ENCODE measurements at regions of chr6 and their contacts with region 1.

Region 1: GRCh38 chr6:138115877-138116660 is 8.8 kb upstream of the PERP start:
- DNase-seq: peak; percentile 26 to 66
- ATAC-seq: peak; percentile 76 to 96 (median 89)
- H3K4me3 ChIP-seq: no peak overlapping the region
- H3K27ac ChIP-seq: no peak overlapping the region
- H3K4me1 ChIP-seq: peaks cover 2% of the 10 kb centered on the region
- H3K27me3 ChIP-seq: peaks cover 0 to 9% (median 7%) of the 10 kb centered on the region in 3 donors
- CTCF ChIP-seq: peak; percentile 78

Region 2: GRCh38 chr6:137432054-137432611 is 683.9 kb before region 1 on chr6:
- intact Hi-C with region 1: no loop called
- DNase-seq: no peak
- ATAC-seq: no peak
- H3K4me3 ChIP-seq: no peak overlapping the region
- H3K27ac ChIP-seq: no peak overlapping the region
- H3K4me1 ChIP-seq: no peaks in the 10 kb centered on the region
- H3K27me3 ChIP-seq: no peaks in the 10 kb centered on the region
- CTCF ChIP-seq: no peak

Region 3: GRCh38 chr6:137589067-137589848 is 526.8 kb before region 1 on chr6:
- intact Hi-C with region 1: no loop called
- DNase-seq: no peak
- ATAC-seq: no peak
- H3K4me3 ChIP-seq: no peak overlapping the region
- H3K27ac ChIP-seq: no peak overlapping the region
- H3K4me1 ChIP-seq: no peaks in the 10 kb centered on the region
- H3K27me3 ChIP-seq: peaks cover 0 to 1% (median 0%) of the 10 kb centered on the region in 3 donors
- CTCF ChIP-seq: no peak

Region 4: GRCh38 chr6:137878486-137879285 is 237.4 kb before region 1 on chr6:
- intact Hi-C with region 1: no loop called
- DNase-seq: peak; percentile 73 to 82
- ATAC-seq: peak in 3 of 4 donors; percentile 38 to 68 (median 52)
- H3K4me3 ChIP-seq: no peak overlapping the region
- H3K27ac ChIP-seq: no peak overlapping the region
- H3K4me1 ChIP-seq: peaks cover 5% of the 10 kb centered on the region
- H3K27me3 ChIP-seq: no peaks in the 10 kb centered on the region
- CTCF ChIP-seq: no peak

Region 5: DNA sequence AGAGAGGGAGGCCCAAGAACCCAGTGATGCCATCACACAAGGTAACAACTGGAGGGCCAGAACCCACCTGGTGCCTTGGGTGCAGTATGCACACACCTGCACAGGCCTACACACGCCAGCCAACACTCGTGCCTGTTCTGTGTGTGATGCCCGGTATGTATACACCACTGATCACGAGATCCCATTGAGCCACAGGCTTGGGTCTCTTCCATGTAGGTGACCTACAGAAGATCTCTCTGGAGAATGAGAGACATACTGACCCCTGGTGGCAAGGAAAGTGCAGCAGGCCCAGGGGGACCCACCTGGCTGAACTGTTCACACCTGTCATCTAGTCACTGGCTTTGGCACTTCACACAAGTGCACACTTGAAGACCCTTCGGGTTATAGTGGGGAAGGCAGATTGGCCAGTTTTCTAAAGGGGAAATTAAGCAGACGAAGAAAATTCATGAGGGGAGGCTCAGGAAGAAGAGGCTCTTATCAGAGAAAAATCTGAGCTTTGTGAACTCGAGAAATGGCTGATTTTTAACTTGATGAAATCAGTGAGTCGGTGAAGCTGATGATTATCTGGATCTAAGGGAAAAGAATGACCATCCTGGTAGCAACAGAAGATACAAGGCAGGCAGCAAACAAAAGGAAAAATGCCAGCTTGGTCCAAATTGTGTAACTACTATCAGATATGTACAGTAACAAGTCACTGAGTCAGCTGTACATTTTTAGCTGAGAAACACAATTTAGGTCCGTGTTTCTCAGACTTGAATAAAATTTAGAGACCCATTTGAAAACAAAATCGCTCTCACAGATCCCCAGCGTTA is 171.3 kb after region 1 on chr6:
- intact Hi-C with region 1: loop called in 1 of 2 experiments (anchors 5 kb)
- DNase-seq: no peak
- ATAC-seq: peak in 2 of 4 donors; percentile 52 to 69
- H3K4me3 ChIP-seq: no peak overlapping the region
- H3K27ac ChIP-seq: no peak overlapping the region
- H3K4me1 ChIP-seq: no peaks in the 10 kb centered on the region
- H3K27me3 ChIP-seq: no peaks in the 10 kb centered on the region
- CTCF ChIP-seq: peak; percentile 21

Region 6: DNA sequence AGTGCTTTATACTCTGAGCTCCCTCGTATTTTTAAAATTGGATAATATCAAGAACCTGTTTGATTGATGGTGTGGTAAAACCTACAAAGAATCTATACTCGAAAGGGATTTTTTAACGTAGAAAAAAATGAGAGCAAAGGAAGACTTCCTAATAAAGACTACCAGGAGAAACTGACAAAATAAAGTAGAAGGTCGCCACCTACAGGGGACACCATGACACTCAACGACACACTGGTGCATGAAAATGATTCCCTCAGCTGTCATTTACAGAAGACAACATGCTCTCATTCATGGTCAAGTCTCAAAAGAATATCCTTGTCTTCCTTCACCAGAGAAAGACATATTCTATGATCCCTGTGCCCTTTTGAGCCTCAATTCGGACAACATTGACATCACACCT is 393.3 kb after region 1 on chr6:
- intact Hi-C with region 1: loop called (anchors 5 kb)
- DNase-seq: no peak
- ATAC-seq: peak in 1 of 4 donors; percentile 64
- H3K4me3 ChIP-seq: no peak overlapping the region
- H3K27ac ChIP-seq: no peak overlapping the region
- H3K4me1 ChIP-seq: no peaks in the 10 kb centered on the region
- H3K27me3 ChIP-seq: no peaks in the 10 kb centered on the region
- CTCF ChIP-seq: peak; percentile 51

Region 7: GRCh38 chr6:138588805-138589434 is 472.9 kb after region 1 on chr6:
- intact Hi-C with region 1: loop called (anchors 2 to 5 kb)
- DNase-seq: peak in 1 of 2 donors; percentile 28
- ATAC-seq: peak; percentile 62 to 85 (median 70)
- H3K4me3 ChIP-seq: no peak overlapping the region
- H3K27ac ChIP-seq: no peak overlapping the region
- H3K4me1 ChIP-seq: no peaks in the 10 kb centered on the region
- H3K27me3 ChIP-seq: no peaks in the 10 kb centered on the region
- CTCF ChIP-seq: peak; percentile 93